PC-3 (cell line): ENCODE measurements at regions of chr3 and their contacts with region 1.

Region 1: DNA sequence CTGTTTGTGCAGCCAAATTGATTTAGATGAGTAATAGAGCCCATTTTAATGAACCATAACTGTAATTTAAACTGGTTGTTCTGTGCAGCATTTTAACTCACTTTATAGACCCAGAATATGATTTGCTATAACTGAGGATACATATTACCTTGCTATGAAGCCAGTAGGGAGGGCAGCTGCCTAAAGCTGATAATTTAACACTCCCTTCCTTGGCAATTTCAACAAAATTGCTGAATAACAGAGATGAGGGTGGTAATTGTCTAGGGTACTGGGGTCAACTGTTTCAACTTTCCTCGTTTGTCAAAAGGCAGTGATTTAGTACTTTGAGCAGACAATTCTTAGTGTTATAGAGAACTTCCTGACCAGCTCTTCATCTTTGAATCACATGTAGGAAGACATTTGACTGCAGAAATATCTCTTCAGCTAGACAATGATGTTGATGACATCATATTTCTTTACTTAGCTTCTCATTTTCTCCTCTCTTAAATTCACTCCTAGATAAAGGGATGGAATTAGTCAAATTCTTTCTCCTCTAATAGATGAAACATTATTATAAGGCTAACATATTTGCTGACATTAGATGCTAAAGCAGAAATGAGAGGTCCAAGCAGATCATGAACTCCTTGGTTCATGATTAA is 305.0 kb upstream of the POU1F1 start:
- DNase-seq: no peak
- ATAC-seq: peak; percentile 88
- H3K4me3 ChIP-seq: no peak overlapping the region
- H3K27ac ChIP-seq: peak overlapping the region; percentile 54
- H3K4me1 ChIP-seq: peaks cover 17% of the 10 kb centered on the region
- H3K27me3 ChIP-seq: no peaks in the 10 kb centered on the region
- CTCF ChIP-seq: no peak

Region 2: DNA sequence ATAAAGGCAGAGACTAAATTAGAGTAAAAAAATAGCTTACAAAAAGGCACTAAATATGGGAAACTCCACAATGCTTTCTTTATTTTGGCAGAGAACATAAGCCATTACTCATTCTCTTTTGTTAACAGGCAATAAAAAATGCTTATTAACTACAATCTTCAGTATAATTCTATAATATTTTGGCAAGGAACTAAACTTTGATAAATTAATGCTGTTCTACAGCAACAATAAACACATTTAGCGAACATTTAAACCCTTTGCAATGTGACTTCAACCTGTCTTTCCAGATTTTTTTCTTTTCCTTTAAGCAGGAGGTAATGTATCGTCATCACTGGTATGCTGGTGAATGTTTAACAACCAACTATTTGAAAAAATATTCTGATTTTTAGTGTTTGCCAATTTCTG is 262.7 kb before region 1 on chr3:
- CTCF ChIA-PET with region 1: no interaction called
- POLR2A ChIA-PET with region 1: no interaction called
- intact Hi-C with region 1: loop called (anchors 10 kb)
- DNase-seq: peak; percentile 79
- ATAC-seq: peak; percentile 67
- H3K4me3 ChIP-seq: peak overlapping the region; percentile 26
- H3K27ac ChIP-seq: peak overlapping the region; percentile 84
- H3K4me1 ChIP-seq: peaks cover 42% of the 10 kb centered on the region
- H3K27me3 ChIP-seq: no peaks in the 10 kb centered on the region
- CTCF ChIP-seq: no peak

Region 3: GRCh38 chr3:87771341-87772192 is 190.2 kb after region 1 on chr3:
- CTCF ChIA-PET with region 1: no interaction called
- POLR2A ChIA-PET with region 1: no interaction called
- intact Hi-C with region 1: loop called (anchors 5 kb)
- DNase-seq: peak; percentile 62
- ATAC-seq: peak; percentile 56
- H3K4me3 ChIP-seq: no peak overlapping the region
- H3K27ac ChIP-seq: no peak overlapping the region
- H3K4me1 ChIP-seq: peaks cover 5% of the 10 kb centered on the region
- H3K27me3 ChIP-seq: no peaks in the 10 kb centered on the region
- CTCF ChIP-seq: peak; percentile 90